MCF 10A (cell line): ENCODE measurements at regions of chr10 and their contacts with region 1.

Region 1: GRCh38 chr10:100009793-100010676 is at the start of gene DNMBP:
- DNase-seq: peak; percentile 76
- H3K4me3 Mint-ChIP-seq: peak within 1 kb of the TSS; percentile 94
- H3K27ac Mint-ChIP-seq: peak within 1 kb of the TSS; percentile 84
- H3K4me1 Mint-ChIP-seq: peaks cover 39% of the 10 kb centered on the region
- H3K27me3 Mint-ChIP-seq: no peaks in the 10 kb centered on the region
- CTCF ChIP-seq: peak; percentile 32
- total RNA-seq, gene DNMBP: 11.3 and 14.3 TPM in 2 replicates

Region 2: DNA sequence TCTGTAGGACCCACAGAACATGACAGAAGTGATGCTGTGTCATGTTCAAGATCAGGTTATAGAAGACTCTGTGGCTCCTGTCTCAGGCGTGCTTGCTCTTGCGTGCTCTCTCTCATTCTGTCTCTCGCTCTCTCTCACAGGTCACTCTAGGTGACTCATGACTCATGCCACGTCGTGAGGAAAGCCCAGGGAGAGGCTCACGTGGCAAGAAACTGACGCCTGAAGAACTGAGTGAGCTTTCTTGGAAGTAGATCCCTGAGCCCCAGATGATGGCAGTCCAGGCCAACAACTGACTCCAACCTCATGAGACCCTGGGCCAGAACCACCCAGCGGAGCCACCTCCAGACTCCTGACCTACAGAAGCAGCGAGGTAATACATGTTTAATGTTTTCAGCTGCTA is 103.6 kb before region 1 on chr10:
- CTCF ChIA-PET with region 1: interaction called, 9 read pairs
- POLR2A ChIA-PET with region 1: interaction called, 14 read pairs
- intact Hi-C with region 1: loop called (anchors 1 kb)
- DNase-seq: peak; percentile 96
- H3K4me3 Mint-ChIP-seq: no peak overlapping the region
- H3K27ac Mint-ChIP-seq: peak overlapping the region; percentile 80
- H3K4me1 Mint-ChIP-seq: peaks cover 14% of the 10 kb centered on the region
- H3K27me3 Mint-ChIP-seq: no peaks in the 10 kb centered on the region
- CTCF ChIP-seq: peak; percentile 38

Region 3: DNA sequence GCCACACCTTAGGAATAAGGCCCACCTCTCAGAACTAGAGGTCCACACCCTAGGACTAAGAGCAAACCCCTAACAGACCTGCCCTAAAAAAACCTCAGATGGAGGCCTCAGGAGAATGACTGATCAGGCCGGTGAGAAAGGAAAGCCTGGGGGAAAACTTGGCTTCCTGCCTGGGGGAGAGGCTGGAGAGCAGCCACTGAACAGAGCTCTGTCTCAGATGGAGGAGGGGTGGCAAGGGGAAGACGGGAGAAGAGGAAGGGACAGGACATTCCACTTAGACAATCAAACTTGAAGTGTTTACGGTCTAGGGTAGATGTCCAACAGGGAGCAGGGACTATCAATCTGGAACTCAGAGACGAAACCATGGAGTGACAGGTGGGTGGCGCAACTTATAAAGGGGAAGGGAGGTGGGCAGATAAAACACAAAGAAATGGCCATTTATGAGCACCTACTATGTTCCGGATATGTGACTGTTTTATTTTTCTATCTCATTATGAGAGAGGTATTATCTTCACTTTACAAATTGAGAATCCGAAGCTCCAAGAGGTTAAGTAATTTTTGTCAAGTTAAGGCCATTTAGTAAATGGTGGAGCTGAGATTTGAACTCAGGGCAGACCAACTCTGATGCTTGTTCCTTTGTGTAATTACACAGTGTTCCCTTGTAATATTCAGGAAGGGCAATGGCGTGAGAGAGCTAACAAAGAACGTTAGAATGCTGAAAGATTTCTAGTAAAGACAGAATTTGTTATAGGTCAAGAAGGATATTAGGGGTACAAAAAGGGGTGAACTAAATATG is 82.9 kb before region 1 on chr10:
- CTCF ChIA-PET with region 1: interaction called, 4 read pairs
- POLR2A ChIA-PET with region 1: interaction called, 11 read pairs
- intact Hi-C with region 1: loop called (anchors 5 kb)
- DNase-seq: peak; percentile 73
- H3K4me3 Mint-ChIP-seq: peak overlapping the region; percentile 42
- H3K27ac Mint-ChIP-seq: peak overlapping the region; percentile 44
- H3K4me1 Mint-ChIP-seq: peaks cover 50% of the 10 kb centered on the region
- H3K27me3 Mint-ChIP-seq: no peaks in the 10 kb centered on the region
- CTCF ChIP-seq: no peak

Region 4: DNA sequence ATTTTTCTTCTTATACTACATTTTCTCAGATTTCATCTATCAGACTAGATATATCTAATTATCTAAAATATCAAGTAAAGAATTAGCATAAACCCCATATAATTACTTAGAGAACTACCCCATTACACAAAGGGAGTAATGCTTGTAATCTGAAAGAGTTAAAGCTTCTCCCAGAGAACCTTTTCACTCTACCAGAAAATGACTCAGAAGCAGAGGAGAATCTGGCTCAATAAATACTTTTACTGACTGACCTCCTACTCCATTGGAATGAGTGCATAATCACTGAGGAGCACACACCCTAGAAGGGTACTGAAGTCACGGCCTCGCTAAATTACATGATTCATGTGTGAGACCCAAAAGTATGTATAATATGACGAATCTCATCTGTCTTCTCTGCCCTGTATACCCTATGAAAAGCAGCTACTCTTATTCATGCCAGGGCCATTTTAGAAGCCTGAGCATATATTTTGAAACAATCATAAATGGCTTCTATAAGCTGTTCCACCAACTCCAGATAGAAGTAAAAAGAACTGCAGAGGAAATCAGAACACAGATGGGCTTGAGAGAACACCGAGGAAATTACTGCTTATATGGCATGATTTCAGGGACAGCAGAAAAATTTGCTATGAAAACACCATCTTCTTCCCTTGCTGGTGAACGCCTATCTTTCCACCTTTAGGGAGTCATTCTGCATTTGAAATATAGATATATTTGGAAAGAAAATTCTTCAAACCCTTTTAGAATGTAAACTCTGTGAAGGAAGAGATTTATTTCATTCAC is 33.0 kb before region 1 on chr10:
- CTCF ChIA-PET with region 1: interaction called, 55 read pairs
- POLR2A ChIA-PET with region 1: interaction called, 547 read pairs
- intact Hi-C with region 1: loop called (anchors 1 kb)
- DNase-seq: peak; percentile 88
- H3K4me3 Mint-ChIP-seq: peak overlapping the region; percentile 67
- H3K27ac Mint-ChIP-seq: peak overlapping the region; percentile 100
- H3K4me1 Mint-ChIP-seq: peaks cover 24% of the 10 kb centered on the region
- H3K27me3 Mint-ChIP-seq: no peaks in the 10 kb centered on the region
- CTCF ChIP-seq: no peak

Region 5: GRCh38 chr10:99993701-99994689 is 16.0 kb before region 1 on chr10:
- CTCF ChIA-PET with region 1: interaction called, 6 read pairs
- POLR2A ChIA-PET with region 1: interaction called, 547 read pairs
- intact Hi-C with region 1: no loop called
- DNase-seq: peak; percentile 77
- H3K4me3 Mint-ChIP-seq: peak overlapping the region; percentile 57
- H3K27ac Mint-ChIP-seq: peak overlapping the region; percentile 82
- H3K4me1 Mint-ChIP-seq: peaks cover 18% of the 10 kb centered on the region
- H3K27me3 Mint-ChIP-seq: no peaks in the 10 kb centered on the region
- CTCF ChIP-seq: no peak

Region 6: GRCh38 chr10:100185364-100186252 is 175.6 kb after region 1 on chr10 and contains the start of gene ERLIN1:
- CTCF ChIA-PET with region 1: interaction called, 5 read pairs
- POLR2A ChIA-PET with region 1: interaction called, 44 read pairs
- intact Hi-C with region 1: loop called (anchors 10 kb)
- DNase-seq: peak; percentile 94
- H3K4me3 Mint-ChIP-seq: peak within 1 kb of the TSS; percentile 94
- H3K27ac Mint-ChIP-seq: peak within 1 kb of the TSS; percentile 90
- H3K4me1 Mint-ChIP-seq: peaks cover 31% of the 10 kb centered on the region
- H3K27me3 Mint-ChIP-seq: no peaks in the 10 kb centered on the region
- CTCF ChIP-seq: no peak
- total RNA-seq, gene ERLIN1: 38.0 and 42.9 TPM in 2 replicates

Region 7: GRCh38 chr10:100229819-100230422 is 219.9 kb after region 1 on chr10:
- CTCF ChIA-PET with region 1: no interaction called
- POLR2A ChIA-PET with region 1: no interaction called
- intact Hi-C with region 1: no loop called
- DNase-seq: no peak
- H3K4me3 Mint-ChIP-seq: peak overlapping the region; percentile 85
- H3K27ac Mint-ChIP-seq: peak overlapping the region; percentile 82
- H3K4me1 Mint-ChIP-seq: peaks cover 19% of the 10 kb centered on the region
- H3K27me3 Mint-ChIP-seq: no peaks in the 10 kb centered on the region
- CTCF ChIP-seq: no peak